Activated T-helper 1 cell treated with anti-CD3 and anti-CD28 coated beads, Interleukin-12 subunit alpha, Interleukin-12 subunit beta, Interleukin-2, Interleukin-4 antibody, amounts not matched to agents 30 ng/mL and 10 ng/mL and 1 ng/mL, durations not matched to agents 14 hours and 24 hours and 36 hours (primary cell): ENCODE measurements at regions of chr11 and their contacts with region 1.

Region 1: GRCh38 chr11:62591448-62592145 is at the start of gene TUT1:
- DNase-seq: peak; percentile 96
- H3K4me3 Mint-ChIP-seq: peak within 1 kb of the TSS; percentile 99
- H3K27ac Mint-ChIP-seq: peak within 1 kb of the TSS; percentile 91
- H3K4me1 Mint-ChIP-seq: peaks cover 48% of the 10 kb centered on the region
- H3K27me3 Mint-ChIP-seq: no peaks in the 10 kb centered on the region
- total RNA-seq, gene TUT1: 38.7 and 40.7 TPM in 2 replicates

Region 2: GRCh38 chr11:62542750-62543567 is 48.6 kb before region 1 on chr11:
- intact Hi-C with region 1: loop called (anchors 2 kb)
- DNase-seq: peak; percentile 69
- H3K4me3 Mint-ChIP-seq: peak overlapping the region; percentile 97
- H3K27ac Mint-ChIP-seq: peak overlapping the region; percentile 95
- H3K4me1 Mint-ChIP-seq: peaks cover 75% of the 10 kb centered on the region
- H3K27me3 Mint-ChIP-seq: peaks cover 3% of the 10 kb centered on the region

Region 3: GRCh38 chr11:62621567-62622470 is 30.2 kb after region 1 on chr11 and contains the start of gene B3GAT3:
- intact Hi-C with region 1: loop called (anchors 1 kb)
- DNase-seq: peak; percentile 96
- H3K4me3 Mint-ChIP-seq: peak within 1 kb of the TSS; percentile 95
- H3K27ac Mint-ChIP-seq: peak within 1 kb of the TSS; percentile 96
- H3K4me1 Mint-ChIP-seq: peaks cover 25% of the 10 kb centered on the region
- H3K27me3 Mint-ChIP-seq: no peaks in the 10 kb centered on the region
- total RNA-seq, gene B3GAT3: 93.8 and 94.3 TPM in 2 replicates

Region 4: DNA sequence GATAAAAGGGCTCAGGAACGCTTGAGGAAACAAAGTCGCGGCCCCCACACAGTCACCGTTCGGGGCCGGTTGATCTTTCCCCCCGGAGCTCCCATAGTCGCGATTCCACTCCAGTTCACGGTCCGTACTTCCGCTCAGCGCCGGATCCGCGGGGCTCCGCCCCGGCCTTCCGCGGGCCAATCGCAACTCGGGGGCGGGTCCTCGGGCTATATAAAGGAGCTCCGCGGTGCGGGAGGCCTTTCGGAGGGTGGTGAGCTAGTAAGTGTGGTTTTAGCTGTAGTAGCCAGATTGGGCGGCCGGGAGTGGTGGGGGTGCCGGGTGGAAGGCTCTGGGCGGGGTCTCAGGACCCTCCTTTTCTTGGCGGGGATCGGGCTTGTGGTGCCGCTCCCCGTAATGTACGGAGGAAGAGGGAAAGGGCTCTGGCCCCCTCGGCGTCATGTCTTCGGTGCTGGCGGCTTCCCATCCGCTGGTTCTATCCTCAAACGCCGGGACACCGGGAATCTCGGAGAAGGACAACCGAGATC is 73.5 kb after region 1 on chr11 and contains the starts of genes C11orf98 and CSKMT:
- intact Hi-C with region 1: loop called (anchors 1 kb)
- DNase-seq: peak; percentile 97
- H3K4me3 Mint-ChIP-seq: peak within 1 kb of the TSS; percentile 98
- H3K27ac Mint-ChIP-seq: peak within 1 kb of the TSS; percentile 81
- H3K4me1 Mint-ChIP-seq: peaks cover 33% of the 10 kb centered on the region
- H3K27me3 Mint-ChIP-seq: no peaks in the 10 kb centered on the region
- total RNA-seq, gene C11orf98: 146 and 151 TPM in 2 replicates
- total RNA-seq, gene CSKMT: 65.0 and 69.4 TPM in 2 replicates

Region 5: DNA sequence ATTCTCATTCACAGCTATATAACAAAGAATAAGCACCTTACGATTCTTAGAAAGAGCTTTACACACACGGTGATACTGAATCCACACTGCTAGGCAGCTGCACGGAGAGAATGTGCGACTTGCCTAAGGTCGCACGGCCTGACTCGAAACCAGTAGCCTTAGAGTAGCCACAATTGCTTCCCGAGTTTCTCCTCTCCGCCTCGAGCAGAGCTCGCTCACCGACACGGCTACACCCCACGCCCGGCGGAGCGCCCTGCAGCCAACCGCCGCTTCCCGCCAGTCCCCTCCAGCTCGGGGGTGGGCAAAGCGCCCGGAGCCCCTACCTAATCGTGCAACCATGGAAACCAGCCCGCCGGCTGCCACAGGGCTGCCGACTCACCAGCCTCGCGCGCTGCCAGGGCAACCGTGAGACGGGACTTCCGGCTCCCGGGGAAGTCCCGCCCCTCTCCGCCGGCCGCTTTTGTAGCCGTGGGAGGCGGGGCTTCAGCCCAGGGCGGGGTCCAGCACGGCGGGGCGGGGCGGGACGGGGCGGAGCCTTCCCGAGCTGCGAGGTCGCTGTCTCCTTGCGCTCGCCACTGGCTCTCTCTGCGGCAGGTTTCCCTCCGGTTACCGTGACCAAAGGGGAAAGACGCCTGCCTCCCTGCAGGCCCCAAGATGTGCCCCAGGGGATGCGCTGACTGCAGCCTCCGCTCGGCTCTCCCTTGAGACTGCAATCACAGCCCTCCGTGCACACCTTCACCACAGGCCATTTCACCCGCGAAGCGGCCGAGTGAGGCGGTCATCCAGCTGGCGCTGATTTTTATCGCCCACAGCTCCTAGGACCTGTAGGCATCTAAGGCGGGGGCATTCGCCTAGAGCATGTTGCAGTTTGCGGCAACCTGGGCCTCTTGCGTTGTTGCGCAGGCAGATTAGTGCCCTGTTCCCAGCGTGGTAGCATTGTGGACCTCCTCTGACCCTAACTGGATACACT is 114.6 kb after region 1 on chr11:
- intact Hi-C with region 1: loop called (anchors 1 kb)
- DNase-seq: peak; percentile 89
- H3K4me3 Mint-ChIP-seq: peak overlapping the region; percentile 89
- H3K27ac Mint-ChIP-seq: peak overlapping the region; percentile 79
- H3K4me1 Mint-ChIP-seq: peaks cover 49% of the 10 kb centered on the region
- H3K27me3 Mint-ChIP-seq: no peaks in the 10 kb centered on the region

Region 6: GRCh38 chr11:62841361-62842184 is 250.0 kb after region 1 on chr11:
- intact Hi-C with region 1: loop called (anchors 2 kb)
- DNase-seq: peak; percentile 83
- H3K4me3 Mint-ChIP-seq: no peak overlapping the region
- H3K27ac Mint-ChIP-seq: no peak overlapping the region
- H3K4me1 Mint-ChIP-seq: peaks cover 18% of the 10 kb centered on the region
- H3K27me3 Mint-ChIP-seq: no peaks in the 10 kb centered on the region